HEK293 (cell line): ENCODE measurements at regions of chr11 and their contacts with region 1.

Region 1: DNA sequence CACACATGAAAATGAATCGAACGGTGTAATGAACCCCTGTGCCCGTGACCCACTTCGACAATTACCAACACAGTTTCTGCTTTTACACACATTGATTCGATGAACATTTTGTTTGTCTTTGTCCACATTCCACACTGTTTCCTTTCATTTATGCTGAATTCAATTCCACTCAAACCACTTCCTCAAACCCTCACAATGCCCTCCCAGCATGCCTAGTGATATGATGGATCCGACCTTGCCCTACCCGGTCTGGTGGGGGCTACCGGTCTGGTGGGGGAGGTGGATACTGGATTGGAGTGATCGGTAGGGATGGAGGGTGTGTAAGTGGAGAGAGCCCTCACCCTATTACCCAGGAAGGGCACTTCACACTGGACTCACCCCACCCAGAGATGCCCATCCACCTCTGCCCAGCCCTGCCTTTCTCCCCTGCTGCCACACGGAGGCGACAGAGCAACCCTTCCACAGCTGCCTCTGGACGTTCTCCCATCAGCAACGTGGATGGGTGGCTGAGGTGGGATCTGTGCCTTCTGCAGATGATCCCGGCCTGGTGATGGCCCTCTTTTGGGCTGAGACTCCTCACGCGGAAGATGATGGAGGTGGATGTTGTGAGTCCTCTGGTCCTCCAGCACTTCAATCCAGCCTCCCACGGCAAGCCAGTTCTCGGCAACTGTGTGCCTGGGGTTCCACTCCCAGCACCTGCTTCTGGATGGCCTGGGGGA is 33.0 kb upstream of the P2RY2 start:
- H3K4me3 ChIP-seq: no peak overlapping the region
- H3K27ac ChIP-seq: no peak overlapping the region
- H3K4me1 ChIP-seq: no peaks in the 10 kb centered on the region
- CTCF ChIP-seq: peak; percentile 52

Region 2: DNA sequence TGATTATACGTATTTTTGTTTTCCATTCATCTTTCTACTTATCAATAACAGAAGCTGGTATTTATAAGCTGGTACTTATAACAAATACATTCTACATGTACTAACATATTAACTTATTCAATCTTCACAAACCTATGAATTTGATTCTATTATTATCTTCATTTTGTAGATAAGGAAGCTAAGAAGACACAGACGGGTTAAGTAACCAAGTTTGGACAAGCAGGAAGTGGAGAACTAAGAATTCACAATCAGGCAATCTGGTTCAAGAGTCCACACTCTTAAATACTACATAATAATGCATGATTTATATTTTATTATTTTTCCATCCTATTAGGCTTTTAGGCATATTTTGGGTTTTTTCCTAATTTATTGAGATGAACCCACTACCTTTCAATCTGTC is 68.0 kb before region 1 on chr11:
- CTCF ChIA-PET with region 1: no interaction called
- POLR2A ChIA-PET with region 1: no interaction called
- H3K4me3 ChIP-seq: no peak overlapping the region
- H3K27ac ChIP-seq: no peak overlapping the region
- H3K4me1 ChIP-seq: peaks cover 8% of the 10 kb centered on the region; the same call in 1 of the 2 replicates
- CTCF ChIP-seq: no peak

Region 3: GRCh38 chr11:73195231-73195992 is 10.3 kb after region 1 on chr11:
- CTCF ChIA-PET with region 1: interaction called, 28 read pairs
- POLR2A ChIA-PET with region 1: no interaction called
- H3K4me3 ChIP-seq: no peak overlapping the region
- H3K27ac ChIP-seq: no peak overlapping the region
- H3K4me1 ChIP-seq: no peaks in the 10 kb centered on the region
- CTCF ChIP-seq: no peak

Region 4: DNA sequence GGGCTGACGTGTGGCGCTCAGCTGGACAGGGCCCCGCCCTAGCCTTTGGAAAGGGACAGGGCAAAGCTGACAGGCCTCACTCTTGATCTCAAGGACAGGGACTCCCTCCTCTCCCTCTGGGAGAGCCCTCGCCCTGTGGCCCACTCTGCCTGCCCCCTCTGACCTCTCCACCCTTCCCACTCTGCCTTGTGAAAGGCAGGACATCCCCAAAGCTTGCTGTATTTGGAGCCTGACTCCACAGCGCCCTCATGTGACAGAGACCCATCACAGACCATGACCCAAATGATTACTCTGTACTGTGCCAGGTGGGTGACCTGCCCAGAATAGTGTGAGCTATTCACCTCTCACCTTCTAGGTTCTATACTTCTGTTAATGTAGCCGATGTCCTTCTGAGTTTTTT is 51.7 kb after region 1 on chr11:
- CTCF ChIA-PET with region 1: interaction called, 62 read pairs
- POLR2A ChIA-PET with region 1: interaction called, 3 read pairs
- H3K4me3 ChIP-seq: no peak overlapping the region
- H3K27ac ChIP-seq: no peak overlapping the region
- H3K4me1 ChIP-seq: no peaks in the 10 kb centered on the region
- CTCF ChIP-seq: peak; percentile 22; the same call in 1 of the 2 replicates